BJ (cell line): ENCODE measurements at regions of chr1 and their contacts with region 1.

Region 1: DNA sequence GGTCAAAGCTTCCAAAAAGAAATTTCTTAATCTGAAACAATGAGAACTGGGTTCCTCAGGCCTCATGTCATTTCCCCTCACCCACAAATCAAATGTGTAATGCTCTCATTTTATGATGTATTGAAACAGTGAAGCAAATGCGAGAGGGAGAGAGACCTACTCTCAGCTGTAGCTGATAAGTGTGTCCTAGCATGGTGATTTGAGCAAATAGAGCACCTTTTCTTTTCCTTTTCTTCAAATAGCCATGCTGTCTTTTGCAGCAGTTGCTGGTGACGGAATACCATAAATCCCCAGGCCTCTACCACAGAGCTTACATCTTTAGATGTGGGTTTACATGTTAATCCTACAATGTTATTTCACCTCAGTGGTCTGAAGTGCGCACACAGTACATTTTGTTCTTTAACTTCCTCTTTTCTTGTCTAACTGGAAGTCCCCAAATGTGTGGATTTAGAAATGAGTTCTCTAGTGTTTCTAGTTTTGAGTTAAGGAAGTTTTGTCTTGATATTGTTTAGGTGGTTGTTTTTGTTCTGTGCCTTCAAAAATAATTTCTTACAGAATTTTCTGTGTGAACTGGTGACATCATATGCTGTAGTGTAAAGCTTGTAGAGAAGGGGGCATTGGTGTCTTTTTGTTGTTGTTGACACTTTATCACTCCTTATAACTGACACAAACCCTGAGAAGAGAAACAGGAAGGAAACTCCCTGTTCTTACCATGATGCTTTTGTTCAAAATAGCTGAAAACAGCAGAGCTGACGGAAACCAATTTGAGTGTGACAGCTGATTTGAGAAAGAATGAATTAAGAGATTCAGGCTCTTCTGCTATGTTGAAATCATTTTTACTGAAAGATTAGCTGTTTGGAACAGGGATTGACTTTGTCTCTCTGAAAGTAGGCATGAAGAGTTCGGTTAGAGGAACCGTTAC is 12.2 kb downstream of the SMAP2 start:
- DNase-seq: no peak
- H3K4me3 ChIP-seq: no peak overlapping the region
- H3K27me3 ChIP-seq: no peaks in the 10 kb centered on the region
- CTCF ChIP-seq: no peak

Region 2: DNA sequence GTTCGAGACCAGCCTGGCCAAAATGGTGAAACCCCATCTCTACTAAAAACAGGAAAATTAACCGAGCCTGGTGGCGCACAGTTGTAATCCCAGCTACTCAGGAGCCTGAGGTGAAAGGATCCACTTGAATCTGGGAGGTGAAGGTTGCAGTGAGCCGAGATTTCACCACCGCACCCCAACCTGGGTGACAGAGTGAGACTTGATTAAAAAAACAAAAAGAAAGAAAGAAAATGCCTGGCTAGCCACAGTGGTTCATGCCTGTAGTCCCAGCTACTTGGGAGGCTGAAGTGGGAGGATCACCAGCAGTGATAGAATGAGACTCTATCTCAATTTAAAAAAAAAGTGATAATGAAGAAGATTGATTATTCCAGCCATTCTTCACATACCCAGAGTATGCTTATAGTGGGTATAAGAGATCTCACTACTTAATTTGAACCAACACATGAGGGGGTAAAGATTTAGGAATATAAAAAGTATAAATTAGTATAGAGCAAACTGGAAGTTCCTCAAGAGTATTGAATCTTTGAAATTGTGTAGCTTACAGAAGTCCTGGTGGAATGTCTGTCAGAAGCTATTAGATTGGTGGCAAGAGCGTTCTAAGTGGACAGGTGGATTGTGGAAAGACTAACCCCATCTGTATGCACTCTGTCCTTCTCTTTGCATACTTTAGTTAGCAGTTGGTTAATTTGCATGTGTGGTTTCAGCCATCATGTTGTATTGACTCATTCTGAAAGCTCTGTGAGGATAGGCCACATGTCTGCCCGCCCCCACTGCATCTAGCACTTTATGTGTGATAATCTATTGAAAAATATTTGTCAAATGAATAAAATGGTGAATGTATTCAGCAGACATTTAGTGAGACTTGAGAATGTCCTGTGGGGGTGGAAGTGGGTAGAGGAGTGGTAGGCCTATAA is 199.5 kb before region 1 on chr1:
- CTCF ChIA-PET with region 1: no interaction called
- POLR2A ChIA-PET with region 1: no interaction called
- DNase-seq: no peak
- H3K4me3 ChIP-seq: no peak overlapping the region
- H3K27me3 ChIP-seq: no peaks in the 10 kb centered on the region
- CTCF ChIP-seq: no peak

Region 3: GRCh38 chr1:40404670-40405462 is 19.2 kb after region 1 on chr1:
- CTCF ChIA-PET with region 1: interaction called, 18 read pairs
- POLR2A ChIA-PET with region 1: no interaction called
- DNase-seq: no peak
- H3K4me3 ChIP-seq: no peak overlapping the region
- H3K27me3 ChIP-seq: no peaks in the 10 kb centered on the region
- CTCF ChIP-seq: peak; percentile 78

Region 4: DNA sequence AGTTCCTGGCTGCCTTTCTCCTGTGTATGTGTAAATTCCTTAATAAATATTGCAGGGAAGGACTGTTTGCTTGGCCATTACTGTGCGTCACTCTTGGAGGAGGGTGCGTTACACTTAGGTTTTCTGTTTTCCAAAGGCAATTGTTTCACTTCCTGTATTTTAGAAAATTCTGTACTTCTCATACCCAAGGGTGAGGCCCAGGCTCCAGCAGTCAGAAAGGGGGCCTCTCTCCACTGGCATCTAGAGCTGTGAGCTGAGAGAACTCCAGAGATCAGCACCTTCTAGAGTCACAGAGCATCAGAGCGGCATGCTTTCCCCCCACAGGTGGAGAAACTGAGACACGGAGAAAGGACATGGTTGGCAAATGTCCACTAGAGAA is 37.6 kb after region 1 on chr1:
- CTCF ChIA-PET with region 1: no interaction called
- POLR2A ChIA-PET with region 1: no interaction called
- DNase-seq: no peak
- H3K4me3 ChIP-seq: no peak overlapping the region
- H3K27me3 ChIP-seq: no peaks in the 10 kb centered on the region
- CTCF ChIP-seq: no peak